Heart right ventricle (tissue), 16 donors: ENCODE measurements at regions of chr19 and their contacts with region 1.

Region 1: DNA sequence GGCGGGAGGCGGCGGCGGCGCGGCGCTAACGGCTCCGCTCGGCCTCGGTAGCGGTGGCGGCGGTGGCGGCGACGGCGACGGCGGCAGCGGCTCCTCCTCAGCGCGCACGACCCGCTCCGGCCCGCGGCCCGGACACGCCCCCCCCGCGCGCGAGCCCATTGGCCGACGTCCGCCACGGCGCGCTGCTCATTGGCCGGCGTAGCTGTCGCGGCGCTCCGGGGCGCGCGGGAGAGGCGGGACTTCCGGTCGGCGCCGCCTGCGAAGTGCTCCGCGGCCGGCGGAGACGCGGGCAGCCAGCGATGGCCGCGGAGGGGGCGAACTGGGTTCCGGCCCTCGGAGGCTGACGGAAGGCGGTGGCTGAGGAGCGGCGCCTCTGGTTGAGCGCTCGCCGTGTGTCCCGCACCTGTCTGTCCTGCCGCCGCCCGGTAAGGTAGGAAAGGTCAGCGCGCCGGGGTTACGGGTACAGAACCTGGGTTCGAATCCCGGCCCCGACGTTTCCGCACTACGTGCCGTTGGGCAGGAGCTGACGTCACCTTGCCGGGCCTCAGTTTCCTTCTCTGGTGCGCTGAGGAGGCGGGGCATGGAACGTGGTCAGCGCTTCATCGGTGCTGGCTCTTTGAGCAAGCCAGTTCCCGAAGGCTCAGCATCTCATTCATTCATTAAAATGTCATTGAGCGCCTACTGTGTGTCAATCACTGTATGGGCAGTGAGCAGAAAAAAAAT is at the start of gene ELAVL1:
- DNase-seq: peak; percentile 88 to 93
- ATAC-seq: peak; percentile 90 to 97 (median 94)
- H3K4me3 ChIP-seq: peak within 1 kb of the TSS; percentile 64 to 96 (median 85)
- H3K27ac ChIP-seq: peak within 1 kb of the TSS; percentile 68 to 93 (median 82)
- H3K4me1 ChIP-seq: peaks cover 25 to 51% (median 42%) of the 10 kb centered on the region in 9 donors
- H3K27me3 ChIP-seq: no peaks in the 10 kb centered on the region
- CTCF ChIP-seq: no peak
- total RNA-seq, gene ELAVL1: 44.2 to 60.1 (median 55.3) TPM

Region 2: DNA sequence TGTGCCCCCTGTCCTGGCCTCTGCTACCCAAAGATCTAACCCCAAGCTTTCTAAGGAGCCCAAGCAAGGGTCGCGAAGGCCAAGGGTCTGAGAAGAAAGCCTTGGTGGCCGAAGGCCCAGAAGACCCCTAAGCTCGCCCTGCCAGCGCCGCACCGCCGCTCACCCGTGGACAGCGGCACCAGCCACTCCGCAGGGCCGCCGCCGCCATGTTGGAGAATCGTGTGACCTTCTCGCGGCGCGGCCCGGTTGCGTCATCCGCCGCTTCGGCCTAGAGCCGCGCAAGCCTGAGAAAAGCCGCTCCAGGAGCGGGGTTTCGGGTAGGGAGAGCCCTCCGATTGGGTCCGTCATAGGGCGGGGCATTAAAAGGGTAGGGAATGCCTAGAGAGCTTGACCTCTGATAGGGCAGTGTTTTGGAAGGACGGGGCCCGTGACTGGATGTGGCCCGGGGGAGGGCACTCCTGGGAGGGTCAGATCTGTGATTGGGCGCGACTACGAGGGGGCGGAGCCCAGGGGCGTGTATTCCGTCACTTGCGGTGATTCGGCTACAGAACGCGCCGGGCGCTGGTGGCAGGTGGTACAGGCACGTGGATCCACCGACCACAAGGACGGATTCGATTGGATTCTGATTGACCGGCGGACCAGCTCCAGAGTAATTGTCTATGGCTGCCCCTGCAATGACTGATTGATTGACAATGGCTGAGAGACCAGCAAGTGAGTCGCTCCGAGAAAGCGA is 62.1 kb before region 1 on chr19 and contains the start of gene TIMM44:
- intact Hi-C with region 1: loop called in 9 of 10 experiments (anchors 1 to 10 kb)
- DNase-seq: peak; percentile 98 to 99
- ATAC-seq: peak; percentile 98 to 99 (median 99)
- H3K4me3 ChIP-seq: peak within 1 kb of the TSS; percentile 67 to 99 (median 89)
- H3K27ac ChIP-seq: peak within 1 kb of the TSS; percentile 85 to 98 (median 96)
- H3K4me1 ChIP-seq: peaks cover 4 to 26% (median 13%) of the 10 kb centered on the region in 9 donors
- H3K27me3 ChIP-seq: no peaks in the 10 kb centered on the region
- CTCF ChIP-seq: no peak
- total RNA-seq, gene TIMM44: 54.9 to 97.5 (median 71.4) TPM

Region 3: DNA sequence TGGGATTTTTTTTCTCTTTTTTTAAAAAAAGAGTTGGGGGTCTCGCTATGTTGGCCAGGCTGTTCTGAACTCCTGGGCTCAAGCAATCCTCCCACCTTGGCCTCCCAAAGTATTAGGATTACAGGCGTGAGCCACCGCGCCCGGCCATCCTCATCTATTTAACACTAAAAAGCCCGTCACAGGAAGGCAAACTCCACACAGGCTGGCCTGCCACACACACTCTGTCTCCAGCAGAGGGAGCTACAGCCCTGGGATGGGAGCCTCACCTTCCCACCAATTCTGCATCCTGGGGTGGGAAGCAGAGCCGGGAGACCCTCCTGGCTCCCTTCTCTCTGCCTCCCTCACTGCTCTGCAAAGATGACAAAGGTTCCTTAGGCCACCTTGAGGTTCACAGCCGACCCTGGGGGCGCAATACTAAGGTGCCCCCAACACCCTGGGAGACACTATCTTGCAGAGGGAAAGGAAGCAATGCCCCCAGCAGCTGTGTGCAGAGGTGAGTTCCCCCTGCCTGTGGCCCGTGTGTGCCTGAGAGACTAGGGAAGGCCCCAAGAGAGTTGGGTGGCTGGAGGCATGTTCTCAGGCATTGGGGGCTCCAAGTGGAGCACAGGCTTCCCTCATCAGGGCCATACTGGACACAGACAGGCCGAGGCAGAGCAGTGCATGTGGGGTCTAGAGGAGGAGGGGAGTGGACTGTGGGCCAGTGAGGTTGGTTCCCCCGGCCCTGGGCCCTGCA is 34.8 kb before region 1 on chr19:
- intact Hi-C with region 1: loop called in 3 of 10 experiments (anchors 2 to 5 kb)
- DNase-seq: no peak
- ATAC-seq: no peak
- H3K4me3 ChIP-seq: no peak overlapping the region
- H3K27ac ChIP-seq: no peak overlapping the region
- H3K4me1 ChIP-seq: peaks cover 0 to 26% (median 12%) of the 10 kb centered on the region in 9 donors
- H3K27me3 ChIP-seq: no peaks in the 10 kb centered on the region
- CTCF ChIP-seq: peak; percentile 53 to 78 (median 73)